Activated CD4-positive, alpha-beta T cell treated with anti-CD3 and anti-CD28 coated beads for 36 hours (primary cell): ENCODE measurements at regions of chr5 and their contacts with region 1.

Region 1: GRCh38 chr5:76402886-76403765 is at the start of gene IQGAP2:
- DNase-seq: peak; percentile 88
- ATAC-seq: peak; percentile 62
- H3K4me3 Mint-ChIP-seq: peak within 1 kb of the TSS; percentile 93
- H3K27ac Mint-ChIP-seq: peak within 1 kb of the TSS; percentile 100
- H3K4me1 Mint-ChIP-seq: peaks cover 56% of the 10 kb centered on the region
- H3K27me3 Mint-ChIP-seq: peaks cover 4% of the 10 kb centered on the region
- total RNA-seq, gene IQGAP2: 62.7 to 82.7 TPM

Region 2: DNA sequence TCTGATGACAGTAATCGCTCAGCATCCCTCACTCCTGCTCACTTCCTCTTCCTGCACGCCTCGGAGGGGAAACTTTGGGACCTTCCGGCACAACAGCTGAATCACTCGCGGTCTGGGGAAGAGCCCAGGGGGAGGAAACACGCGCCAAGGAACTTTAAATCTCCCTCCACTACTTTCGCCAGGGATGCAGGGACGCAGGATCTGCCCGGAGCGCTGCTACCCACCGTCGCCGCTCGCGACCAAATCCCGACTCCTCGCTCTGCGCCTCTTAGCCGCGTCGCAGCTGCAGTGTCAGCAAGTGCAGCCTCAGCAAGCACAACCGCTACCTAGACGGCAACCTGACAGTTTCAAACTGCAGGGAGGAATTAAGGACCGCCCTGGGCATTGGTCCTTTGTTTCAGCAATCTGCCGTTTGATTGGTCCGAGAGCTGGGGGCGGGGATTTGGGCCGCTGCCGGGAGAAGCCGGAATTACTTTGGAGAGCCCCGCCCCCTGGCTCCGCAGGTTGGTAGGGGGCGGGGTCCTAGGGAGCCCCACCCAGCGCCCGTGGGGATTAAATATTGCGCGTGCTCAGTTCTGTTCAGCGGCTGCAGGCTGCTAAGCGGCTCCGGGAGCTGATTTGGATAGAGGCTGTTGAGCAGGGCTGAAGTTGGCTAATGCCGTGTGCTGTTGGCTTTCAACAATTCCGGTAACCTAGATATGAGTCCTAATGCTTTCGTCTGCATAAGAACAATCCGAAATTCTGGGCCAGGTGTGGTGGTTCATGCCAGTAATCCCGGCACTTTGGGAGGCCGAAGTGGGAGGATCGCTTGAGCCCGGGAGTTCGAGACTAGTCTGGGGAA is 685.8 kb before region 1 on chr5 and contains the start of gene POC5:
- CTCF ChIA-PET with region 1: no interaction called
- POLR2A ChIA-PET with region 1: no interaction called
- intact Hi-C with region 1: loop called (anchors 1 to 5 kb)
- DNase-seq: peak; percentile 99
- ATAC-seq: peak; percentile 94
- H3K4me3 Mint-ChIP-seq: peak within 1 kb of the TSS; percentile 97
- H3K27ac Mint-ChIP-seq: peak within 1 kb of the TSS; percentile 99
- H3K4me1 Mint-ChIP-seq: peaks cover 32% of the 10 kb centered on the region
- H3K27me3 Mint-ChIP-seq: no peaks in the 10 kb centered on the region
- total RNA-seq, gene POC5: 20.2 to 20.3 TPM

Region 3: DNA sequence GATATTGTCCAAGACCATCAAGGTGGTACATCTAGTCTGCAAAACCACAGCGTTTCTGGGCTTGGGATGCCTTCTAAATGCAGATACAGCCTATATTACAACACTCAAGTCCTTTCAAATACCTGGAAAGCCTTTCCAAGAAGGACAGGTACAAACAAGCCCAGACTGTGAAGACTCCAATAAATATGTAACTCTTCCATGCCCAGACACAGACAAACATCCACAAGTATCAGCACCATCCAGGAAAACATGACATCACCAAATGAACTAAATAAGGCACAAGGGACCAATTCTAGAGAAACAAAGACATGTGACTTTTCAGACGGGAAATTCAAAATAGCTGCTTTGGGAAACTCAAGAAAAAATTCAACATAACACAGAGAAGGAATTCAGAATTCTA is 533.2 kb before region 1 on chr5:
- CTCF ChIA-PET with region 1: no interaction called
- POLR2A ChIA-PET with region 1: no interaction called
- intact Hi-C with region 1: no loop called
- DNase-seq: no peak
- ATAC-seq: no peak
- H3K4me3 Mint-ChIP-seq: no peak overlapping the region
- H3K27ac Mint-ChIP-seq: no peak overlapping the region
- H3K4me1 Mint-ChIP-seq: no peaks in the 10 kb centered on the region
- H3K27me3 Mint-ChIP-seq: peaks cover 16% of the 10 kb centered on the region

Region 4: GRCh38 chr5:76337953-76338451 is 65.1 kb before region 1 on chr5:
- CTCF ChIA-PET with region 1: no interaction called
- POLR2A ChIA-PET with region 1: no interaction called
- intact Hi-C with region 1: loop called (anchors 2 to 5 kb)
- DNase-seq: peak; percentile 47
- ATAC-seq: peak; percentile 80
- H3K4me3 Mint-ChIP-seq: no peak overlapping the region
- H3K27ac Mint-ChIP-seq: no peak overlapping the region
- H3K4me1 Mint-ChIP-seq: peaks cover 25% of the 10 kb centered on the region
- H3K27me3 Mint-ChIP-seq: no peaks in the 10 kb centered on the region

Region 5: GRCh38 chr5:76521240-76521758 is 118.2 kb after region 1 on chr5:
- CTCF ChIA-PET with region 1: interaction called, 3 read pairs
- POLR2A ChIA-PET with region 1: interaction called, 6 read pairs
- intact Hi-C with region 1: loop called in 1 of 2 experiments (anchors 1 kb)
- DNase-seq: no peak
- ATAC-seq: peak; percentile 85
- H3K4me3 Mint-ChIP-seq: no peak overlapping the region
- H3K27ac Mint-ChIP-seq: peak overlapping the region; percentile 91
- H3K4me1 Mint-ChIP-seq: peaks cover 67% of the 10 kb centered on the region
- H3K27me3 Mint-ChIP-seq: no peaks in the 10 kb centered on the region

Region 6: DNA sequence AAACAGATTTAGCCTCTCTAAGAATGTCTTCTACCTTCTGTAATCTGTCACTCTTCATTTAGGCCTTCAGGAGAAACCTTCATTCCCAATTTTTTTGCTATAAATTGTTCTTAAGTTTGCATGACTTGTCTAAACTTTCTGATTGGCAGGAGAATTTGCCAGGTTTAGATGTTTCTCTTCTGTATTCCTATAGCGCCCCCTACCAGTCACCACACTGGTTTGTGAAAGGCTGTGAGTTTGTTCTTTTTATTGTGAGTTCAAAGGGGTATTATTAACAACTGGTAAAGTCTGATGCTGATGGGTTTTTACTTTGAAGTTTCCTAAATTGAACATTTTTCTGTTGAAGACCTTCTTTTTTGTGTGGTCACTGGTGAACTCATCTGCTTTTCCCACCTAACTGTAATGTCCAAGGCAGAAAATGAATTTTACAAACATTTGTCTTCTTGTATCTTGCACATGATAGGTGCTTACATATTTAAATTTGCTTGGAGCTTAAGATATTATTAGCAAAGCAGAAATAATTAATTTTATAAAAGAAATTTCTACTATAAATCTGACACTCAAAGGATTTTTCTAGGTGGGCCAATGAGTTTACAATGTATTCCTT is 238.5 kb after region 1 on chr5:
- CTCF ChIA-PET with region 1: no interaction called
- POLR2A ChIA-PET with region 1: no interaction called
- intact Hi-C with region 1: loop called in 1 of 2 experiments (anchors 1 kb)
- DNase-seq: peak; percentile 74
- ATAC-seq: no peak
- H3K4me3 Mint-ChIP-seq: no peak overlapping the region
- H3K27ac Mint-ChIP-seq: no peak overlapping the region
- H3K4me1 Mint-ChIP-seq: peaks cover 5% of the 10 kb centered on the region
- H3K27me3 Mint-ChIP-seq: no peaks in the 10 kb centered on the region

Region 7: DNA sequence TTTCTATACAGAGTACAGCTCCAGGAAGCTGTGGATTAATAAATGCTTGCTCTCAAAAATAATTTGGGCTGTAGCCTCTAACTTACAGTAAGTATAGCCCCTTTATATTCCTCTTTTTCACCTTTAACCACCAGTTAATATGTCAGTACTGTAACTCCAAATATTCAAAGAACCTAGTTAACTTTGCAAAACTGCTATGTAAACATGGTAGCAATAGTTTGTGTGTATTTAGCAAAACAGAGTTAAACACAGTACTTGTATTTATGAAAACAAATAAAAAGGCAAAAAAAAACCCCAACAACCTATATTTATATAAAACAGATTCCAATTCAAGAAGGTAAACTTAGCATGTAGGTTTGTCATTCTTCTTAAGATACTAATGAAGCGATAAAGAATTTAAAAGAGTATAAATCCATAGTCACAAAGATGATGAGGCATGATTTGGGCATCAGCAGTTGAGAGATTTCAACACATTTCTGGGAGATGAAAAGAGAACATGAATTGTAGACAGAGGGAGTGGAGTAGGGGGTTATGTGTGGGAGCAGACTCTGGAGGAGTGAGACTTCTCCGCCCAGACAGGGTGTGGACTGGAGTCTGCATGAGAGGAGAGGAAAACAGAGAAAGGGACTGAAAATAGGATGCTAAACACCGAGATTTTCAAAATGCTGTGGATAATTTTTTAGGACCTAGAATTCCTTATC is 368.7 kb after region 1 on chr5:
- CTCF ChIA-PET with region 1: interaction called, 13 read pairs
- POLR2A ChIA-PET with region 1: no interaction called
- intact Hi-C with region 1: no loop called
- DNase-seq: no peak
- ATAC-seq: no peak
- H3K4me3 Mint-ChIP-seq: no peak overlapping the region
- H3K27ac Mint-ChIP-seq: no peak overlapping the region
- H3K4me1 Mint-ChIP-seq: peaks cover 2% of the 10 kb centered on the region
- H3K27me3 Mint-ChIP-seq: no peaks in the 10 kb centered on the region

Region 8: GRCh38 chr5:77095189-77095588 is 692.1 kb after region 1 on chr5:
- CTCF ChIA-PET with region 1: no interaction called
- POLR2A ChIA-PET with region 1: no interaction called
- intact Hi-C with region 1: no loop called
- DNase-seq: no peak
- ATAC-seq: no peak
- H3K4me3 Mint-ChIP-seq: no peak overlapping the region
- H3K27ac Mint-ChIP-seq: no peak overlapping the region
- H3K4me1 Mint-ChIP-seq: no peaks in the 10 kb centered on the region
- H3K27me3 Mint-ChIP-seq: no peaks in the 10 kb centered on the region